Heart right ventricle (tissue), 16 donors: ENCODE measurements at regions of chr6 and their contacts with region 1.

Region 1: GRCh38 chr6:35583893-35584688 is 71.4 kb upstream of the TULP1 start:
- DNase-seq: peak in 1 of 2 donors; percentile 81
- ATAC-seq: peak; percentile 59 to 85 (median 76)
- H3K4me3 ChIP-seq: no peak overlapping the region
- H3K27ac ChIP-seq: peak overlapping the region in 5 of 10 donors; percentile 4 to 51 (median 21)
- H3K4me1 ChIP-seq: peaks cover 0 to 55% (median 16%) of the 10 kb centered on the region in 9 donors
- H3K27me3 ChIP-seq: no peaks in the 10 kb centered on the region
- CTCF ChIP-seq: peak; percentile 66 to 94 (median 87)

Region 2: DNA sequence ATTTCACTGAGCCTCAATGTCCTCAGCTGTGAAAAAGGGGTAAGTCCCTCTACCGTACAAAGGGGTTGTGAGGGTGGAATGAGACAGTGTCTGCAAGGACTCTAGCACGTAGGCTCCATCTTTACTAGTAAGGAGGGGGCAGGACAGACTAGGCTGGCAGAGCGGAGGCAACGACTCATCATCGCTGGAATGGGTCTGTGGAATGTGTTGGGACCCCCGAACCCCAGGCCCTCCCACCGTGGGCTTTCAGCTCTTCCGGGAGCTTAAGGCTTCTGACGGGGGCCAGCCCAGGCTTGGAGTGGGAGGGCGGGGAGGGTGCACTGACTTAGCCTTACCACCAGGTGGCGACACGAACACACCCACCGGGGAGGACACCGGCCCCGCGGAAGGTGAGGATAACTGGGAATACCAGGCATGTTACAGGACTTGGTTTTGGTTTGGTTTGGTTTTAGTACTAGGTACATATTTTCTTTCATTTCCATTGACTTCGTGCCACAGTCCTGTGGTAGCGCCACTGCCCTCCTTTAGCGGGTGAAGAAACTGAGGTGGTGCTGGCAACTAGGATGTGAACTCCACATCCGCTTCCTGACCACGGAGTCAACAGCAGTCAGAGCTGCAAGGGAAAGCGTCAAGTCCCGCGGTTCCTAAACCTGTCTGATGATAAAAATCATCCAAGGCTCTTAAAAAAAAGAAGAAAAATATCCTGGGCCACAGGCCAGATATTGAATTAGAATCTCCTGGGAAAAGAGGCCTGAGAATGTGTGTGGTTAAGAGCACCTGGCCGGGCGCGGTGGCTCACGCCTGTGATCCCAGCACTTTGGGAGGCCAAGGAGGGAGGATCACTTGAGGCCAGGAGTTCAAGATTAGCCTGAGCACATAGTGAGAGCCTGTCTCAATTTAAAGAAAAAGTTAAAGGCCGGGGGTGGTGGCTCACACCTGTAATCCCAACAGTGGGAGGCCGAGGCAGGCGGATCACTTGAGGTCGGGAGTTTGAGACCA is 61.1 kb before region 1 on chr6:
- intact Hi-C with region 1: loop called in 5 of 10 experiments (anchors 5 to 10 kb)
- DNase-seq: peak; percentile 65 to 72
- ATAC-seq: peak; percentile 82 to 95 (median 92)
- H3K4me3 ChIP-seq: peak overlapping the region in 6 of 10 donors; percentile 23 to 43 (median 36)
- H3K27ac ChIP-seq: peak overlapping the region in 1 of 10 donors; percentile 3
- H3K4me1 ChIP-seq: peaks cover 0 to 10% (median 0%) of the 10 kb centered on the region in 9 donors
- H3K27me3 ChIP-seq: no peaks in the 10 kb centered on the region
- CTCF ChIP-seq: peak; percentile 87 to 99 (median 98)

Region 3: DNA sequence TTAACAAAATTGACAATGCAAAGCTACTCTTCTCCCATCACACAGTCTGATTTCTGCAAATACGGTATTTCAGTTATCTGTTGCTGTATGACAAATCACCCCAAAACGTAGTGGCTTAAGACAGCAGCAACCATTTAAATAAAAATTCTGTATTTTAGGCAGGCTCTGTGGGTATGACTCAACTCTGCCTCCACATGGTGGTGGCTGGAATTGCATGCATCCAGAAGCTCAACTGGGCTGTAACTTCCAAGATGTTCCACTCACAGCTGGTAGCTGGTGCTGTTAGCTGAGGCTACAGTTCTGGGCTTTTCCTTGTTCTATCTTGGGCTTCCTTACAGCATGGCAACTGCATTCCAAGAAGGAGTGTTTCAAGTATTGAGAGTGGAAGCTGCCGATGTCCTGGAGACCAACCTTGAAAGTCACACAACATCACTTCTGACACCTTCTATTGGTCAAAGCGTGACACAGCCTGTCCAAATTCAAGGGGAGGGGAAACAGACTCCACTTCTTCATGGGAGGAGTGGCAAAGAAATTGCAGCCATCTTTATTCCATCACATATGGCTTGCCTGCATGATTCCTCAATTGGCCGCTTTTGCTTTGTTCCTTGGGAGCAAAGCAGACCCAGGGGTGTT is 31.7 kb before region 1 on chr6:
- intact Hi-C with region 1: no loop called
- DNase-seq: no peak
- ATAC-seq: no peak
- H3K4me3 ChIP-seq: no peak overlapping the region
- H3K27ac ChIP-seq: no peak overlapping the region
- H3K4me1 ChIP-seq: peaks cover 0 to 5% (median 0%) of the 10 kb centered on the region in 9 donors
- H3K27me3 ChIP-seq: peaks cover 0 to 12% (median 0%) of the 10 kb centered on the region in 7 donors
- CTCF ChIP-seq: peak in 8 of 9 donors; percentile 36 to 89 (median 50)

Region 4: GRCh38 chr6:35624341-35625070 is 40.4 kb after region 1 on chr6:
- intact Hi-C with region 1: loop called in 3 of 10 experiments (anchors 5 kb)
- DNase-seq: no peak
- ATAC-seq: peak in 1 of 8 donors; percentile 23
- H3K4me3 ChIP-seq: no peak overlapping the region
- H3K27ac ChIP-seq: peak overlapping the region in 2 of 10 donors; percentile 62 to 69
- H3K4me1 ChIP-seq: peaks cover 0 to 63% (median 0%) of the 10 kb centered on the region in 9 donors
- H3K27me3 ChIP-seq: no peaks in the 10 kb centered on the region
- CTCF ChIP-seq: peak in 8 of 9 donors; percentile 10 to 51 (median 31)

Region 5: GRCh38 chr6:35681298-35681697 is 97.2 kb after region 1 on chr6:
- intact Hi-C with region 1: loop called in 5 of 10 experiments (anchors 2 to 10 kb)
- DNase-seq: no peak
- ATAC-seq: no peak
- H3K4me3 ChIP-seq: no peak overlapping the region
- H3K27ac ChIP-seq: no peak overlapping the region
- H3K4me1 ChIP-seq: peaks cover 0 to 90% (median 21%) of the 10 kb centered on the region in 9 donors
- H3K27me3 ChIP-seq: no peaks in the 10 kb centered on the region
- CTCF ChIP-seq: no peak

Region 6: GRCh38 chr6:35731736-35732532 is 147.8 kb after region 1 on chr6:
- intact Hi-C with region 1: loop called (anchors 1 to 2 kb)
- DNase-seq: peak; percentile 95 to 98
- ATAC-seq: peak; percentile 60 to 86 (median 77)
- H3K4me3 ChIP-seq: peak overlapping the region; percentile 42 to 96 (median 84)
- H3K27ac ChIP-seq: peak overlapping the region; percentile 98 to 100 (median 100)
- H3K4me1 ChIP-seq: peaks cover 21 to 80% (median 56%) of the 10 kb centered on the region in 9 donors
- H3K27me3 ChIP-seq: no peaks in the 10 kb centered on the region
- CTCF ChIP-seq: peak in 5 of 9 donors; percentile 9 to 47 (median 21)